PC-3 (cell line): ENCODE measurements at regions of chr3 and their contacts with region 1.

Region 1: DNA sequence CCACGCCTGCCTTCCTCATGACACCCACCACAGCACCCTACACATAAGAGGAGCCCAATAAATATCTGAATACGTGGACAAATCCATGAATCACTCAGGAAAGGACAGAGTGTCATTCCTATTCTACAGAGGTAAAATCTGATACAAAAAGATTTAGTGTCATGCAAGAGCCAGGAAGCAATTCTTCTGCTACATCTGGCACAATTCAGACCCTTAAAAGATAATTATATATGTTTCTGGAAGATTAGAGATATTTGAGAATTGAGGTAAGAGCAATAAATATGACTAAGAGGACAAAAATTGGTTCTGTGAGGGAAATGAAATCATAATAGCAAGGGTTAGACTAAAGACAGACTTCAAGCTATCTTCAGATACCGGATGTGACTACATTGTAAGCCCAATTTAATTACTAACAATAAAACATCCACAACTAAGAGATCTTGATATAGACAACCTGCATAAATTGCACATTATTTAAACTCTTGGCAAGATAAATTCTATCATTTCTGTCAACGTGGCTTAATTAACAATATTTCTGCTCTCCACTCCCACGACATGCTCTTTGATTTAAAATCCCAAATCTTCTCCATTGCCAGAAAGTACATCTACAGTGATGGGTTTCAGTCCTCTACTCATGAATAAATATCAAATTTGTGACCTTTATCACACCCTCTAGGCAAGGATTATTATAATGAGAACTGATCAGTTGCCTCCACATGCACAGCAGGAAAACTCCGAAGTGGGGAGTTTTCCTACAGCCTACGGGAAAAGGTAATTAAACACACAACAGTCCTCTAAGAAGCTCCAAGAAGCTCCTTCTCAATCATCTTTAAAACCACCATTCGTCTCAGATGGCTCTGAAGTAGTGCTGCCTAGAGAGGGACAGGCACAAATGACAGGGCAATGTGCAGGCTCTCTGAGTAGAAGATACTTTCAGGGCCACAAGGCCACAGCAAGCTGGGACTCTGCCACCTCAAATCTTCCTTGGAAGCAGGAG is 32.6 kb downstream of the MB21D2 start:
- DNase-seq: peak; percentile 92
- ATAC-seq: peak; percentile 48
- H3K4me3 ChIP-seq: no peak overlapping the region
- H3K27ac ChIP-seq: peak overlapping the region; percentile 98
- H3K4me1 ChIP-seq: peaks cover 91% of the 10 kb centered on the region
- H3K27me3 ChIP-seq: no peaks in the 10 kb centered on the region
- CTCF ChIP-seq: no peak

Region 2: GRCh38 chr3:192901435-192901834 is 16.4 kb after region 1 on chr3:
- CTCF ChIA-PET with region 1: interaction called, 3 read pairs
- POLR2A ChIA-PET with region 1: no interaction called
- intact Hi-C with region 1: loop called (anchors 1 kb)
- DNase-seq: peak; percentile 96
- ATAC-seq: peak; percentile 88
- H3K4me3 ChIP-seq: peak overlapping the region; percentile 33; the same call in 1 of the 2 replicates
- H3K27ac ChIP-seq: peak overlapping the region; percentile 95
- H3K4me1 ChIP-seq: peaks cover 85% of the 10 kb centered on the region
- H3K27me3 ChIP-seq: no peaks in the 10 kb centered on the region
- CTCF ChIP-seq: no peak